ENCODE measurements at regions of chr16 and their contacts with region 1.

Region 1: GRCh38 chr16:82580298-82580890 is 46.4 kb upstream of the CDH13 start:
- DNase-seq: peak in 1 of 2 donors; percentile 15
- ATAC-seq: peak; percentile 47 to 81 (median 62)
- H3K4me3 ChIP-seq: no peak overlapping the region
- H3K27ac ChIP-seq: no peak overlapping the region
- H3K4me1 ChIP-seq: peaks cover 0 to 5% (median 0%) of the 10 kb centered on the region in 9 donors
- H3K27me3 ChIP-seq: no peaks in the 10 kb centered on the region
- CTCF ChIP-seq: peak in 7 of 9 donors; percentile 32 to 63 (median 49)

Region 2: GRCh38 chr16:81967358-81967757 is 613.0 kb before region 1 on chr16:
- intact Hi-C with region 1: loop called in 1 of 10 experiments (anchors 10 kb)
- DNase-seq: no peak
- ATAC-seq: no peak
- H3K4me3 ChIP-seq: no peak overlapping the region
- H3K27ac ChIP-seq: no peak overlapping the region
- H3K4me1 ChIP-seq: no peaks in the 10 kb centered on the region
- H3K27me3 ChIP-seq: no peaks in the 10 kb centered on the region
- CTCF ChIP-seq: no peak

Region 3: DNA sequence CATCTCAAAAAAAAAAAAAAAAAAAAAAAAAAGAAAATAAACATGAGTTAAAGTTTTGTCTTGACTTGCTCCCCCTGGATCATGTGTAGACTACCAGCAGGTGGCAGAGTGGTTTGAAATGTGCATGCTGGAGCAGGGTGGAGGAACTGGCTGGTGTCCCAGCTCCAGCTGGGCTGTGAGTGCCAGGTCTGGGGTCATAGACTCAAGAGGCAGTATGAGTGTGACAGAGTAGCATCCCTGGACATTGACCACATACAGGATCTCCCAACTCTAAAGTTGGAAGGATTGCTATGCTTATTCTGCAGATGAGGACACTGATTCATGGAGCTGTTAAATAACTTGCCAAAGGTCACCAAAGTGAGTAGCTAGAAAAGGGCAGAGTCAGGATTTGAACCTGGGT is 212.4 kb before region 1 on chr16:
- intact Hi-C with region 1: loop called in 8 of 10 experiments (anchors 5 to 10 kb)
- DNase-seq: peak; percentile 52 to 64
- ATAC-seq: peak; percentile 80 to 95 (median 90)
- H3K4me3 ChIP-seq: no peak overlapping the region
- H3K27ac ChIP-seq: no peak overlapping the region
- H3K4me1 ChIP-seq: no peaks in the 10 kb centered on the region
- H3K27me3 ChIP-seq: no peaks in the 10 kb centered on the region
- CTCF ChIP-seq: peak; percentile 6 to 58 (median 40)

Region 4: GRCh38 chr16:82379551-82379950 is 200.8 kb before region 1 on chr16:
- intact Hi-C with region 1: loop called in 1 of 10 experiments (anchors 10 kb)
- DNase-seq: no peak
- ATAC-seq: no peak
- H3K4me3 ChIP-seq: no peak overlapping the region
- H3K27ac ChIP-seq: no peak overlapping the region
- H3K4me1 ChIP-seq: no peaks in the 10 kb centered on the region
- H3K27me3 ChIP-seq: no peaks in the 10 kb centered on the region
- CTCF ChIP-seq: no peak

Region 5: GRCh38 chr16:82456683-82457082 is 123.7 kb before region 1 on chr16:
- intact Hi-C with region 1: loop called in 3 of 10 experiments (anchors 5 to 10 kb)
- DNase-seq: peak; percentile 26 to 28
- ATAC-seq: peak in 7 of 8 donors; percentile 38 to 85 (median 75)
- H3K4me3 ChIP-seq: no peak overlapping the region
- H3K27ac ChIP-seq: no peak overlapping the region
- H3K4me1 ChIP-seq: no peaks in the 10 kb centered on the region
- H3K27me3 ChIP-seq: peaks cover 0 to 14% (median 8%) of the 10 kb centered on the region in 7 donors
- CTCF ChIP-seq: peak; percentile 39 to 81 (median 73)